ENCODE measurements at regions of chr5 and their contacts with region 1.

Region 1: DNA sequence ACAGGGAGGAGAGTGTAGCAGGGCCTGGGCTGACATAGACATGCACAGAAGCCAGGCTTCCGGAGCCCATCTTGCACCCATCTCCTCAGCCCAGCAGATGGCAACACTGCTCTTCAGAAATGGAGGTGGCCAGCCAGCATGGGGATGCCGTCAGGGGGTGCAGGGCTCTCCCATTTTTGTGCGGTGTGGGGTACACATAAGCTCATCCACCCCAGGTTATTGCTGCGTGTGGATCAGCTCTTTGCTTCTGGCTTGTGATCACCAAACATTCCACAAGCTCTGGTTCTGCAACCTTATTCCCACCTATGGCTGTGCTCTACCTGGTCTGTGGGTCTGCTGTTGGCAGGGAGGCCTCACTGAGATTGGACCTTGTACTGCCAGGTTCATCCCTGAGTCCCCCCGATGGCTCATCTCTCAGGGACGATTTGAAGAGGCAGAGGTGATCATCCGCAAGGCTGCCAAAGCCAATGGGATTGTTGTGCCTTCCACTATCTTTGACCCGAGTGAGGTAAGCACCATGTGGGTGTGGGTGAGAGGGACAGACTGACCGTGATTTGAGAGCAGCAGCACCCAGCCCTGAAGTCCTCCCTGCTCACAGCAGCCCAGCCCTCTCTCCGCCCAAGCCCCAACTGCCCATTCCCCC is 17.3 kb downstream of the SLC22A5 start:
- DNase-seq: peak; percentile 81
- CTCF ChIP-seq: peak; percentile 89

Region 2: GRCh38 chr5:131548176-131548575 is 838.6 kb before region 1 on chr5:
- in situ Hi-C with region 1: no loop called
- DNase-seq: no peak
- CTCF ChIP-seq: no peak

Region 3: GRCh38 chr5:132490486-132491367 is 104.0 kb after region 1 on chr5 and contains the start of gene IRF1:
- in situ Hi-C with region 1: loop called (anchors 10 kb)
- DNase-seq: peak; percentile 99
- CTCF ChIP-seq: no peak

Region 4: GRCh38 chr5:132820162-132820754 is 433.5 kb after region 1 on chr5:
- in situ Hi-C with region 1: loop called (anchors 10 kb)
- DNase-seq: peak; percentile 93
- CTCF ChIP-seq: peak; percentile 84

Measured in GM13977 (cell line).